Heart right ventricle (tissue), 16 donors: ENCODE measurements at regions of chr6 and their contacts with region 1.

Region 1: DNA sequence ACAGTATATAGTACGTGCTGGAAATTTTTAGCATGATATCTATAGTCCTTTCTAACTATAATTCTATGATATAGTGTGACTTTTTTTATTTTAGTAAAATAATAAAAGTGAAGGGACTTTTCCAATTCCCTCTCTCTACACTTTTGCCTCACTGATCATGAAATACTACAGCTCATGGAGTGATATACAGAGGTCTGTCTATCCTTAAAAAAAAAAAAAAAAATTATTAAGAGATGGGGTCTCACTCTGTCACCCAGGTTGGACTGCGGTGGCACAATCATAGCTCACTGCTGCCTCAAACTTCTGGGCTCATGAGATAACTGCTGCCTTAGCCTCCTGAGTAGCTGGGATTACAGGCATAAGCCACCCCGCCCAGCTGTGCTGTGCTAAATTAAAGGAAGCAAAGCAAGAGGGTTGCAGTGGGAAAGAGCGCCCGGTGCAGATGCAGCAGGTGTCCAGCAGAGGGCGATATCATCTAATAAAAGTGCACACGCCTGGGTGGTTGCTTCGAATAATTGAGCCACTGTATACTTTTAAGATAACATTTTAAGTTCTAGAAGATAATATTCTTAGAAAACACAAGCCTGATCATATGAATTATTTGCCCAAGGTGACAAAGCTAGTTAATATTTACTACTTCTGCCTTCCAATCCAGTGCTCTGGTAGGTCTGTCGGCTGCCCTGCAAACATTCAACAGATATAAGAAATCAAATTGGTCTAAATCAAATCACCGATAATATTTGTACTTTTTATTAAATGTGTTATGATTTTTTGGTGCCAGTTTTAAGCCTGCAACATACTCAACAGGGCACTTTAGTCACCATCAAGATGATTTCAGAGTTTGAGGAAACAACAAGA is 94.9 kb upstream of the NT5E start:
- DNase-seq: peak; percentile 61 to 67
- ATAC-seq: peak; percentile 64 to 91 (median 88)
- H3K4me3 ChIP-seq: no peak overlapping the region
- H3K27ac ChIP-seq: no peak overlapping the region
- H3K4me1 ChIP-seq: no peaks in the 10 kb centered on the region
- H3K27me3 ChIP-seq: no peaks in the 10 kb centered on the region
- CTCF ChIP-seq: peak in 8 of 9 donors; percentile 78 to 98 (median 94)

Region 2: DNA sequence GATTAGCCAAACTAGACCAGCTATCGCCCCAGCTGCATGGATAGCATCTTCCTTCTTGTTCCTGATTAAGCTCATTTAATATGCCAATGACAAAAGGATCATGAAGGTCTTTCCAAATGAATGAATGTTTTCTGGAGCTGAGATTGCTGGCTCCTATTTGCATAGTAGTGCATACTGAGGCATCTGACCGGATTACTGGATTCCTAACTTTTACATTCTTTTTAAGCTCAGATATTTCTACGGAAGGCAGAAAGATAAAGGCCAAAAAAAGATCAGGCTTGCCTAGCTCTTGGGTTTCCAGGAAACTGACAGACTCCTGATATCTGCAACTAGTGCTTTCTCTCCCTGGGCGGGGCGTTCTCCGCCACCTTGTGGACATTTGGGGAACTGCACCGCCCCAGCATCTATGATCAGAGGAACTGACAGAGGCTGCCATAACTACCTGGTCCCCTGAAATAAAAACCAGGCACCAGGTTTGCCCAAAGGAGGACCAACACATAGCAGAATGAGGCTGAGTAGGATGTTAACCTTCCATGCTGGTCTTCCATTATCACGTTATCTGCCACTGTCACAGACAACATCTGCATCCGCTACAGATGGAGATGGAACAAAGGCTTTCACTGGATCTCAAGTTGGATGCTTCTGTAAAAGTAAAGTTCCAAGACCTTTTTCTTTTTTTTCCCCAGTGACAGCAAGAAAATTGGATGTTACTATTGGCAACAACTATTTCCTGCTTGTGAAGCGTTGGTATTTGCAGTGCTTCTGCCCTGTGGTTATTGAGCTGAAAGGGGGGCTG is 128.1 kb after region 1 on chr6:
- intact Hi-C with region 1: loop called (anchors 1 to 5 kb)
- DNase-seq: peak; percentile 67 to 79
- ATAC-seq: peak; percentile 72 to 93 (median 88)
- H3K4me3 ChIP-seq: peak overlapping the region in 1 of 10 donors; percentile 15
- H3K27ac ChIP-seq: peak overlapping the region in 4 of 10 donors; percentile 26 to 57 (median 40)
- H3K4me1 ChIP-seq: peaks cover 0 to 14% (median 11%) of the 10 kb centered on the region in 9 donors
- H3K27me3 ChIP-seq: no peaks in the 10 kb centered on the region
- CTCF ChIP-seq: peak; percentile 98 to 100 (median 99)

Region 3: DNA sequence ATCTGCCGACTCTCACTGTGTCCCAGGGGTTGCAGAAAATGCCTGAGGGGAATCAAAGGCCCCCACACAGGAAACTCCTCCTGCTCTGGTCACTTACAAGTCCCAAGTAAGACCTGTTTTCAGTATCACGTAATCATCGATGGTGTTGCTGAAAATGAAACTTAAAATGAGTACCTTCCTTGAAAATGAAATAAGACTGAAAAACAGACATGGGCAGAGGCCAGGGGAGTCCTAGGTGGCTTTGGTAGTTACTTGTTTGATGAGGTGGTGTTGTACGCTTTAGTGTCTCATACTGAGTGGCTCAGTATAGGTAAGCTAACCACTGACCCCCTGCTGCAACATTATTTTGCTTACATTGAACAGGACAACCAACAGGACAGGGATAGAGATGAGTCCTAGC is 330.7 kb after region 1 on chr6:
- intact Hi-C with region 1: loop called in 1 of 10 experiments (anchors 10 kb)
- DNase-seq: no peak
- ATAC-seq: no peak
- H3K4me3 ChIP-seq: no peak overlapping the region
- H3K27ac ChIP-seq: no peak overlapping the region
- H3K4me1 ChIP-seq: no peaks in the 10 kb centered on the region
- H3K27me3 ChIP-seq: no peaks in the 10 kb centered on the region
- CTCF ChIP-seq: no peak